Activated naive CD4-positive, alpha-beta T cell treated with anti-CD3 and anti-CD28 coated beads for 36 hours (primary cell): ENCODE measurements at regions of chr19 and their contacts with region 1.

Region 1: GRCh38 chr19:45770192-45771101 is 1.4 kb upstream of the SIX5 start:
- DNase-seq: peak; percentile 89
- H3K4me3 Mint-ChIP-seq: peak overlapping the region; percentile 81
- H3K27ac Mint-ChIP-seq: no peak overlapping the region
- H3K4me1 Mint-ChIP-seq: peaks cover 10% of the 10 kb centered on the region
- H3K27me3 Mint-ChIP-seq: peaks cover 16% of the 10 kb centered on the region

Region 2: GRCh38 chr19:45730389-45731288 is 39.8 kb before region 1 on chr19 and contains the start of gene FBXO46:
- CTCF ChIA-PET with region 1: no interaction called
- intact Hi-C with region 1: loop called (anchors 1 kb)
- DNase-seq: peak; percentile 99
- H3K4me3 Mint-ChIP-seq: peak within 1 kb of the TSS; percentile 95
- H3K27ac Mint-ChIP-seq: peak within 1 kb of the TSS; percentile 83
- H3K4me1 Mint-ChIP-seq: peaks cover 29% of the 10 kb centered on the region
- H3K27me3 Mint-ChIP-seq: no peaks in the 10 kb centered on the region
- total RNA-seq, gene FBXO46: 21.8 to 23.2 TPM

Region 3: GRCh38 chr19:45742969-45743368 is 27.5 kb before region 1 on chr19:
- CTCF ChIA-PET with region 1: no interaction called
- intact Hi-C with region 1: no loop called
- DNase-seq: no peak
- H3K4me3 Mint-ChIP-seq: no peak overlapping the region
- H3K27ac Mint-ChIP-seq: no peak overlapping the region
- H3K4me1 Mint-ChIP-seq: no peaks in the 10 kb centered on the region
- H3K27me3 Mint-ChIP-seq: no peaks in the 10 kb centered on the region

Region 4: DNA sequence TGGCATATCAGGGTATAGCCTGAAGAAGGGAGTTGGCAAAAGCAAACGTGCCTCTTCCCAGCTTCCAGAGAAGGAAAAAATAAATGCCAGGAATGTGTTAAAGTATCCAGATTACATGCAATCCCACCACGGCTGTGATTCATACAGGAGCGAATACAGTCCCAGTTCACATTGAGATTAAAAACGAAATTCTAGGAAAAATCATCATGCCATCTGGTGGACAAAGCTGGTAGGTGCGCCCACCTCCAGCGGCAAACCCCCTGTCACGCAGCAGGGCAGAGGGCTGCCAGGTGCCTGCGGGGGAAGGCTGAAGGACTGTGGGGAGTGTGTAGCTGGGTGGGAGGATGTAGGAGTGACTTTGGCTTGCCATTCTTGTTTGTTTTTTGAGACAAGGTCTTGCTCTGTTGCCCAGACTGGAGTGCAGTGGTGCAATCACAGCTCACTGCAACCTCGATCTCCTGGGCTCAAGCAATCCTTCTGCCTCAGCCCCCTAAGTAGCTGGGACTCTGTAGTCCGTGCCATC is 28.6 kb after region 1 on chr19:
- CTCF ChIA-PET with region 1: interaction called, 127 read pairs
- intact Hi-C with region 1: loop called (anchors 1 kb)
- DNase-seq: peak; percentile 69
- H3K4me3 Mint-ChIP-seq: no peak overlapping the region
- H3K27ac Mint-ChIP-seq: no peak overlapping the region
- H3K4me1 Mint-ChIP-seq: peaks cover 4% of the 10 kb centered on the region
- H3K27me3 Mint-ChIP-seq: peaks cover 30% of the 10 kb centered on the region

Region 5: GRCh38 chr19:45886427-45887199 is 116.2 kb after region 1 on chr19:
- CTCF ChIA-PET with region 1: no interaction called
- intact Hi-C with region 1: loop called (anchors 1 kb)
- DNase-seq: peak; percentile 98
- H3K4me3 Mint-ChIP-seq: peak overlapping the region; percentile 94
- H3K27ac Mint-ChIP-seq: peak overlapping the region; percentile 95
- H3K4me1 Mint-ChIP-seq: peaks cover 25% of the 10 kb centered on the region
- H3K27me3 Mint-ChIP-seq: no peaks in the 10 kb centered on the region

Region 6: DNA sequence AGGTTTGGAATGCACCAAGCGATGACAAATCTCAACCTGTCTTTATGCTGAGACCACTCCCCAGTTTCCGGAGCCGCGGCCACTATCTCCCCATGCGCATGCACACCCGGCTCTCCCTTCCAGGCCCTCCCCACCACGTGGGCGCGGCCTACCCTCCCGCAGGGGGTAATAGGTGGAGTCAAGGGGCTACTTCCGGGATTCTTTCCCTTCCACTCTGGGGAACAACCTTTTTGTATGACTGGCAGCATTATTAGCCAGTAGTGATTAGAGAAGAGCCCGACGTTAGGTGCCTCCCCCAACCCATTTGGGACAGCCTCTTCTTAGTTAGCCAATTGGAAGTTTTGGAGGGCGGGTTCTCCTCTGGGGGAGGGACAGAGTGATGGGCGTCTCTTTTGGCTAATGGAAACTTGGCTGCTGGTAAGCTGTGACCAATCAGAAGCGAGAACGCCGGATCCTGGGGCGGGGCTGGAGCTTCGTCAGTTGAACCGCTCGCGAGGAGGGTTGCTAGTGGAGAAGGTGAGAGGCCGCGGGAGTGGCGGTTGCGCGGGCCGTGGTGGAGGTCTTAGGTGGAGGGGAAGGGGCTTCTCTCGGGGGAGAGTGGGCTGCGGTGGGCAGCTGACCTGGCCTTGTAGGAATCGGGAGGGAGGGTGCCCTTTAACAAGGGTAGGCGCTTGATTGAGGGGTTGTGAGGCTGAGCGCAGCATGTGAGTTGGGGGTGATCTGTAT is 224.7 kb after region 1 on chr19 and contains the start of gene CCDC61:
- CTCF ChIA-PET with region 1: interaction called, 4 read pairs
- intact Hi-C with region 1: loop called (anchors 1 kb)
- DNase-seq: peak; percentile 98
- H3K4me3 Mint-ChIP-seq: peak within 1 kb of the TSS; percentile 40
- H3K27ac Mint-ChIP-seq: no peak within 1 kb of the TSS
- H3K4me1 Mint-ChIP-seq: peaks cover 23% of the 10 kb centered on the region
- H3K27me3 Mint-ChIP-seq: no peaks in the 10 kb centered on the region
- total RNA-seq, gene CCDC61: 26.4 to 29.3 TPM